Dendritic cell treated with granulocyte-macrophage colony-stimulating factor and Interleukin-4, amounts not matched to agents 40 ng/mL and 50 ng/mL, for 4 days (primary cell): ENCODE measurements at regions of chr2 and their contacts with region 1.

Region 1: GRCh38 chr2:190408538-190409271 is 550 bp downstream of the MFSD6 start:
- H3K4me3 Mint-ChIP-seq: peak overlapping the region; percentile 73
- H3K27ac Mint-ChIP-seq: peak overlapping the region; percentile 80
- H3K4me1 Mint-ChIP-seq: peaks cover 29% of the 10 kb centered on the region
- H3K27me3 Mint-ChIP-seq: peaks cover 2% of the 10 kb centered on the region

Region 2: GRCh38 chr2:190319555-190320498 is 88.9 kb before region 1 on chr2 and contains the start of gene HIBCH:
- intact Hi-C with region 1: no loop called
- H3K4me3 Mint-ChIP-seq: peak within 1 kb of the TSS; percentile 82
- H3K27ac Mint-ChIP-seq: peak within 1 kb of the TSS; percentile 80
- H3K4me1 Mint-ChIP-seq: peaks cover 15% of the 10 kb centered on the region
- H3K27me3 Mint-ChIP-seq: no peaks in the 10 kb centered on the region

Region 3: GRCh38 chr2:190534310-190535120 is 125.8 kb after region 1 on chr2 and contains the start of gene NEMP2:
- intact Hi-C with region 1: loop called (anchors 10 kb)
- H3K4me3 Mint-ChIP-seq: peak within 1 kb of the TSS; percentile 83
- H3K27ac Mint-ChIP-seq: peak within 1 kb of the TSS; percentile 91
- H3K4me1 Mint-ChIP-seq: peaks cover 21% of the 10 kb centered on the region
- H3K27me3 Mint-ChIP-seq: no peaks in the 10 kb centered on the region